RWPE1 (cell line): ENCODE measurements at regions of chr20 and their contacts with region 1.

Region 1: GRCh38 chr20:60057123-60057801 is 99.0 kb downstream of the CDH26 start:
- DNase-seq: peak; percentile 93
- H3K27ac ChIP-seq: peak overlapping the region; percentile 66; the same call in 1 of the 2 replicates
- CTCF ChIP-seq: peak; percentile 99

Region 2: DNA sequence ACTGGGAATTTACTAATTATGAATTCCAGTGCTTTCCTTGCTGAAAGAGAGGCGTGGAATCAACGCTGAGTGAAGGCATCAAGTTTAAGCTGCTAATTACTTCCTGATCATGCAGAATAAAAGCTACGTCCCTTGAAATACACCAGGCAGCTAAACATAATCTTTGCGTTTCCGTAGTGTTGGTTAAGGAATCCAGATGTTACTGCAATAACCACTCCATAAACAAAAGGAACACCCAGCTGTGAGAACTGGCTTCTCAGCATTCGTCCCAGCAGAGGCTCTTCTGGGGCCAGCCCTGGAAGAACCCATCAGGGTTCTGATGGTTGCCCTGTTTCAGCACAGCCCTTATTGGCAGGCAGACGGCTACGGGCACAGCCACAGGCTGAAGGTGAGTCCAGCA is 12.4 kb after region 1 on chr20:
- CTCF ChIA-PET with region 1: interaction called, 17 read pairs
- POLR2A ChIA-PET with region 1: no interaction called
- DNase-seq: no peak
- H3K27ac ChIP-seq: no peak overlapping the region
- CTCF ChIP-seq: no peak

Region 3: GRCh38 chr20:60262967-60263603 is 205.8 kb after region 1 on chr20:
- CTCF ChIA-PET with region 1: interaction called, 13 read pairs
- POLR2A ChIA-PET with region 1: no interaction called
- DNase-seq: peak; percentile 82
- H3K27ac ChIP-seq: no peak overlapping the region
- CTCF ChIP-seq: peak; percentile 87